A673 (cell line): ENCODE measurements at regions of chr9 and their contacts with region 1.

Region 1: DNA sequence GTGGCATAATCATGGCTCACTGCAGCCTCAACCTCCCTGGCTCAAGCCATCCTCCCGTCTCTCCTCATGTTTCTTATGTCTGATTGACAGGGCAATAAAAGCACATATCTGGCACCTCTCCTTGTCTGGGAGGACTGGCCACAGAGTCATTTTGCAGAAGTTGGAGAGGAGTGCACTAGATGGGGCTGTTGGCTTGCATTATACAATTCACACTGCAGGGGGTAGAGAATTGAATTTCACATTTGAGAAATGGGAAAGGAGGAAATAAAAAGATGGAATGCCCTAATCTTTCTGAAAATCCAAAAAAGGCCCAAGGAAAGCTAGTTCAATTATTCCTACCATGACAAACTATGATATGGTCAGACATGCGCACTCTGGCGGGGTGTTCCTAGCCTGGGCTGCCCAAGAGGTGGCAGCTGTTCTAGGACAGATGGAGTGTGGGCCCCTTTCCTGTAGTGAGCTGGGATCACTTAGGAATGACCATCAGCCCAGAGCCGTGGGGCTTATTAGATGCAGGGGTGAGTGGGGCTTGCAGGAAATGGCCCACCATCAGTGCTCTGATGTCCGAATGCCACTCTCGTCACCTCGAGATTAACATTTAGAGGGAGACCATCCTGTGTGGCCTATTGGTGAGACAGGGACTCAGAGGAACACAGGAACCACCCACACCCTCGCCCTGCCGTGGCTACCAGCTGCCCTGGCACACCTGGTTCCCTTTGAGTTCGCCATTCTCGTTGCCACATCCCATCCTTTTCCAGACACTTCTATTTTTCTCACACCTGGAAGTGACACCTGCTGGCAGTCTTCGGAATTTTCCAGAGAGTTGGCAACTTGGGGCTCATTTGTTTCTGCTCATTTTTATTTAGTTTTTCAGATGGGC is 21.8 kb upstream of the ANKRD18A start:
- DNase-seq: peak; percentile 75
- H3K4me3 ChIP-seq: no peak overlapping the region
- H3K27ac ChIP-seq: no peak overlapping the region
- H3K4me1 ChIP-seq: no peaks in the 10 kb centered on the region
- H3K27me3 ChIP-seq: no peaks in the 10 kb centered on the region
- CTCF ChIP-seq: peak; percentile 60

Region 2: GRCh38 chr9:38214432-38214831 is 427.8 kb before region 1 on chr9:
- CTCF ChIA-PET with region 1: interaction called, 10 read pairs
- POLR2A ChIA-PET with region 1: no interaction called
- intact Hi-C with region 1: no loop called
- DNase-seq: no peak
- H3K4me3 ChIP-seq: no peak overlapping the region
- H3K27ac ChIP-seq: no peak overlapping the region
- H3K4me1 ChIP-seq: no peaks in the 10 kb centered on the region
- H3K27me3 ChIP-seq: peaks cover 7% of the 10 kb centered on the region
- CTCF ChIP-seq: no peak

Region 3: GRCh38 chr9:38277601-38278200 is 364.5 kb before region 1 on chr9:
- CTCF ChIA-PET with region 1: no interaction called
- POLR2A ChIA-PET with region 1: no interaction called
- intact Hi-C with region 1: no loop called
- DNase-seq: no peak
- H3K4me3 ChIP-seq: no peak overlapping the region
- H3K27ac ChIP-seq: no peak overlapping the region
- H3K4me1 ChIP-seq: no peaks in the 10 kb centered on the region
- H3K27me3 ChIP-seq: no peaks in the 10 kb centered on the region
- CTCF ChIP-seq: no peak

Region 4: DNA sequence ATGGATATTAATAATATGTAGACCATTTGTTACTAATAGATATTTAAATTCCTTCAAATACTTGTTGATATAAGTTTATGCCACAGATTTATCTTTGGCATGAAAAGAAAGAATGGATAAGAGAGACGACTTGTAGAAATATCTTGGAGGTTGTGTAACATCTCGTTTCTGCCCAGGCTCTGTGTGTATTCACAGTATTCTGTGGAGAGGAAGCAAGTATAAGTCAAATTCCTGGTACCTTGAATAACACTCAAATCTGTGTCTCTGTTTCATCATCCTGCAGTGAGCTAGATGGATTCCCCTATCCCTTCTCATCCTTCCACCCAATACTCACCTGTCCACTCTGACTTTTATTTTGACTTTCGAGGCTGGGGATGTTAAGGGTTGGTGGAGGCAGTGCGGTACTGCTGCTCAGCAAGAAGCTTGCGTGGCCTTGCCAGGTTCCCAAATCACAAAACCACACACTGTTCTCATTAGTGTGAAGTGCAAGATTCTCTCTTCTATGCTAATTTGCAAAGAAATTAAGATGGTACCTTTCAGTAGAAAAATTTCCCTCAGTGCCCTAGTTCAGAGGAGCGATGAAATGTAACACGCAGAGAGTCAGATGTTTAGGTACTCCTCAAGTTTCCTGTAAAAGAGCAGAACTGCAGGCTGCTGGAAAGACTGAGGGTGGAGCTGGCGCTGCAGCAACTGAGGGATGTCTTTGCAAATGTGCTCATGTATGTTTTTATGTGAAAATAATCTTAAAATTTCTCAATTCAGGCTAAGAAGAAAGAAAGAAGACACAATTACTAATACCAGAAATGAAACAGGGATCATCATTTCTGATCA is 20.8 kb after region 1 on chr9:
- CTCF ChIA-PET with region 1: no interaction called
- POLR2A ChIA-PET with region 1: no interaction called
- intact Hi-C with region 1: no loop called
- DNase-seq: peak; percentile 29
- H3K4me3 ChIP-seq: no peak overlapping the region
- H3K27ac ChIP-seq: no peak overlapping the region
- H3K4me1 ChIP-seq: no peaks in the 10 kb centered on the region
- H3K27me3 ChIP-seq: no peaks in the 10 kb centered on the region
- CTCF ChIP-seq: peak; percentile 50

Region 5: GRCh38 chr9:38727497-38728001 is 85.3 kb after region 1 on chr9:
- CTCF ChIA-PET with region 1: no interaction called
- POLR2A ChIA-PET with region 1: no interaction called
- intact Hi-C with region 1: no loop called
- DNase-seq: peak; percentile 4
- H3K4me3 ChIP-seq: no peak overlapping the region
- H3K27ac ChIP-seq: no peak overlapping the region
- H3K4me1 ChIP-seq: no peaks in the 10 kb centered on the region
- H3K27me3 ChIP-seq: no peaks in the 10 kb centered on the region
- CTCF ChIP-seq: 0 out of 2 replicates have a peak, but pooled peaks have one; percentile 13